ENCODE measurements at regions of chr19 and their contacts with region 1.

Region 1: GRCh38 chr19:38335949-38336637 is 463 bp downstream of the CATSPERG start:
- DNase-seq: peak; percentile 85 to 96 (median 95)
- ATAC-seq: peak; percentile 66
- H3K4me3 ChIP-seq: peak overlapping the region; percentile 85 to 94
- H3K4me3 Mint-ChIP-seq: peak overlapping the region; percentile 89
- H3K27ac ChIP-seq: peak overlapping the region; percentile 84 to 95
- H3K27ac Mint-ChIP-seq: peak overlapping the region; percentile 97
- H3K4me1 ChIP-seq: peaks cover 10% of the 10 kb centered on the region
- H3K4me1 Mint-ChIP-seq: peaks cover 17% of the 10 kb centered on the region
- H3K27me3 ChIP-seq: no peaks in the 10 kb centered on the region
- H3K27me3 Mint-ChIP-seq: no peaks in the 10 kb centered on the region
- CTCF ChIP-seq: no peak

Region 2: DNA sequence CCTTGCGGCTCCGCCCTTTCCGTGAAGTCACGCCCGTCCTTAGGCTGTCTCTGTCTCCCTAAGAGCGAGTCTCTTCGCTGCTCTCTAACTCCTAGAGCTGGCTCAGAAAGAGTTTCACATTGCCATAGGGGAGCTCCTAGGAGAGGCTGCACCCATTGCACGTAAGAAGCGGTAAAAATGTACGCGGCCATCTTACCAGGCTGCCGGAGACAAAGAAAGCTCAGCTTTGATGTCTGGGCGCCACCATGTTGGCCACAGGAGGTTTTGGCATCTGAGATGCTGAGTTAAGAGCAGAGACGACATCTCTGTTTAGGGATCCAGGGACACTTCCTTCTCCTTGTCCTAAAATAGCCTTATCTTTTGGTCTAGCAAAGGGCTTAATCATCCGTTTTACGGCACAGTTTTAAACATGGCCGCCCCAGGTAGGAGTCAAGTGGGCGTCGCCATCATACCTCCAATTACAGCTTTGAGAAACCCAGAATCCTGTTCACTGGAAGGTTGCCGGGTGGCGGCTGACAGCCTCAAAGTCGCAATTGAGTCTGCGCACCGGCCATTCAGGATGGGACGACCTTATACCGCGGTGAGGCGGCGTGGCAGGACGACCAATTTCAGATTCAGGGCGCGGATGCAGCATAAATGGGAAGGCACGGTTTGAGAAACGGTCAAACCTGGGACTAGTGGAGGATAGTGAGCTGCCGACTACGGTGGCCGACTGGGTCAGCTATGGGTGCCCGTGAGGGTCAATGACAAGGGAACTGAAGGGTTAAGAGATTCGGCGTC is 829.5 kb before region 1 on chr19 and contains the start of gene ZNF793:
- CTCF ChIA-PET with region 1: no interaction called
- POLR2A ChIA-PET with region 1: no interaction called
- intact Hi-C with region 1: loop called in 1 of 2 experiments (anchors 2 kb)
- DNase-seq: peak; percentile 53 to 89 (median 83)
- ATAC-seq: peak; percentile 87
- H3K4me3 ChIP-seq: peak within 1 kb of the TSS; percentile 82 to 86
- H3K4me3 Mint-ChIP-seq: no peak within 1 kb of the TSS
- H3K27ac ChIP-seq: peak within 1 kb of the TSS; percentile 94 to 97
- H3K27ac Mint-ChIP-seq: no peak within 1 kb of the TSS
- H3K4me1 ChIP-seq: peaks cover 16% of the 10 kb centered on the region
- H3K4me1 Mint-ChIP-seq: no peaks in the 10 kb centered on the region
- H3K27me3 ChIP-seq: no peaks in the 10 kb centered on the region
- H3K27me3 Mint-ChIP-seq: no peaks in the 10 kb centered on the region
- CTCF ChIP-seq: no peak
- total RNA-seq, gene ZNF793: 2.4 to 3.3 TPM

Region 3: GRCh38 chr19:38122402-38123093 is 213.5 kb before region 1 on chr19:
- CTCF ChIA-PET with region 1: no interaction called
- POLR2A ChIA-PET with region 1: no interaction called
- intact Hi-C with region 1: no loop called
- DNase-seq: no peak
- ATAC-seq: no peak
- H3K4me3 ChIP-seq: no peak overlapping the region
- H3K4me3 Mint-ChIP-seq: no peak overlapping the region
- H3K27ac ChIP-seq: no peak overlapping the region
- H3K27ac Mint-ChIP-seq: no peak overlapping the region
- H3K4me1 ChIP-seq: no peaks in the 10 kb centered on the region
- H3K4me1 Mint-ChIP-seq: no peaks in the 10 kb centered on the region
- H3K27me3 ChIP-seq: no peaks in the 10 kb centered on the region
- H3K27me3 Mint-ChIP-seq: no peaks in the 10 kb centered on the region
- CTCF ChIP-seq: no peak

Region 4: DNA sequence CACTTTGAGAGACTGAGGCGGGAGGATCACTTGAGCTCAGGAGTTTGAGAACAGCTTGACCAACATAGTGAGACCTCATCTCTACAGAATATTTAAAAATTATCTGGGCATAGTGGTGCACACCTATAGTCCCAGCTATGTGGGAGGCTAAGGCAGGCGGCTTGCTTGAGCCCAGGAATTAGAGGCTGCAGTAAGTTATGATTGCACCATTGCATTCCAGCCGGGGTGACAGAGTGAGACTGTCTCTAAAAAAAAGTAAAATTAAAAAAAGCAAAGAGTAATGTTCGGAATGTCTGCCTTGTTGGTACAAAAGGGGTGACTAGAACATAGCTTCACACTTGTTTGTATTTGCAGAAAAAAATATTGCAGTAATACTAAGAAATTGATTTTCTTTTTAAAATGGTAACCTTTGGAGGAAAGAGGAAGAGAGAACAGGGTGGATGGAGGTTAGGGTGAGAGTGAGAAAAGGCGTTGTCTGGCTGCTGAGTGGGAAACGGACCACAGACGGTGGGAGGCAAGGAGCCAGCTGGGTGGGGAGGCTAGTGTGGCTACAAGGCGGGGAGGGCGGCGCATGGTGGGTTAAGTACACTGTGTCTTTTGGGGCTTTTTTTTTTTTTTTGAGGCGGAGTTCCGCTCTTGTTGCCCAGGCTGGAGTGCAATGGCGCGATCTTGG is 90.1 kb before region 1 on chr19:
- CTCF ChIA-PET with region 1: interaction called, 62 read pairs
- POLR2A ChIA-PET with region 1: interaction called, 7 read pairs
- intact Hi-C with region 1: loop called in 1 of 2 experiments (anchors 1 kb)
- DNase-seq: no peak
- ATAC-seq: no peak
- H3K4me3 ChIP-seq: no peak overlapping the region
- H3K4me3 Mint-ChIP-seq: no peak overlapping the region
- H3K27ac ChIP-seq: no peak overlapping the region
- H3K27ac Mint-ChIP-seq: no peak overlapping the region
- H3K4me1 ChIP-seq: no peaks in the 10 kb centered on the region
- H3K4me1 Mint-ChIP-seq: peaks cover 4% of the 10 kb centered on the region
- H3K27me3 ChIP-seq: no peaks in the 10 kb centered on the region
- H3K27me3 Mint-ChIP-seq: peaks cover 5% of the 10 kb centered on the region
- CTCF ChIP-seq: no peak

Region 5: DNA sequence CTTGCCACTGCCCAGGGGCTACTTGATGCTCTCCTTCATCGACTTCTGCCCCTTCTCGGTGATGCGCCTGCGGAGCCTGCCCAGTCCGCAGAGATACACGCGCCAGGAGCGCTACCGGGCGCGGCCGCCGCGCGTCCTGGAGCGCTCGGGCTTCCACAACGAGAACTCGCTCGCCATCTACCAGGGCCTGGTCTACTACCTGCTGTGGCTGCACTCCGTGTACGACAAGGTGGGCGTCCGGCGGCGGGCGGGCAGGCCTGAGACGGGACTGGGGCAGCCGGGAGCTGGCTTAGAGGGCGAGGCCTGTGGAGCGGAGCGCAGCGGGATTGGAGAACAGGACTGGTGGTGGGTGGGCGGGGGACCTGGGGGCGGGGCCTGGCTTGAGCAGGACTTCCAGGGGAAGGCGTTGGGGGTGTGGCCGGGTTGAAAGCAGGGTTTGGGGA is 25.6 kb after region 1 on chr19:
- CTCF ChIA-PET with region 1: interaction called, 5 read pairs
- POLR2A ChIA-PET with region 1: no interaction called
- intact Hi-C with region 1: loop called (anchors 1 kb)
- DNase-seq: peak; percentile 17 to 75 (median 58)
- ATAC-seq: peak; percentile 73
- H3K4me3 ChIP-seq: peak overlapping the region; percentile 50 to 77
- H3K4me3 Mint-ChIP-seq: peak overlapping the region; percentile 81
- H3K27ac ChIP-seq: no peak overlapping the region
- H3K27ac Mint-ChIP-seq: no peak overlapping the region
- H3K4me1 ChIP-seq: peaks cover 10% of the 10 kb centered on the region
- H3K4me1 Mint-ChIP-seq: peaks cover 14% of the 10 kb centered on the region
- H3K27me3 ChIP-seq: peaks cover 0 to 3% of the 10 kb centered on the region in 2 experiments
- H3K27me3 Mint-ChIP-seq: peaks cover 2% of the 10 kb centered on the region
- CTCF ChIP-seq: peak; percentile 16

Region 6: DNA sequence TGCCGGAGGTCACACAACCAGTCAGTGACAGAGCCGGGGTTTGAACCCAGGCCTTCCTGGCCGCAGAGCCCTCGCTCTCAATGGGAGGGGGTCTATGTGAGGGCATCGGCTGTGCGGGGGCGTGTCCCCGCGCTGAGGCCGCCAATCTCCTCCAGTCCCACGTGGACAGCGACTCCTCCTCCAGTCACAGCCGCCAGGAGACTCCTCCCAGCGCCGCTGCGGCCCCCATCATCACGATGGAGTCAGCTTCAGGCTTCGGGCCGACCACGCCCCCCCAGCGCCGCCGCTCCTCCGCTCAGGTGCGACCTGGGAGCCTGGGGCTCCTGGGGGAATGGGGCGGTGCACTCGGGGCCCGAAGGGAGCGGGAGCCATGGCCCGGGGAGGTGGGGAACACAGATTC is 58.4 kb after region 1 on chr19:
- CTCF ChIA-PET with region 1: interaction called, 3 read pairs
- POLR2A ChIA-PET with region 1: no interaction called
- intact Hi-C with region 1: loop called (anchors 2 to 5 kb)
- DNase-seq: peak in 8 of 9 experiments; percentile 33 to 79 (median 66)
- ATAC-seq: peak; percentile 72
- H3K4me3 ChIP-seq: peak overlapping the region; percentile 18 to 47
- H3K4me3 Mint-ChIP-seq: peak overlapping the region; percentile 77
- H3K27ac ChIP-seq: no peak overlapping the region
- H3K27ac Mint-ChIP-seq: peak overlapping the region; percentile 52
- H3K4me1 ChIP-seq: peaks cover 15% of the 10 kb centered on the region
- H3K4me1 Mint-ChIP-seq: peaks cover 17% of the 10 kb centered on the region
- H3K27me3 ChIP-seq: no peaks in the 10 kb centered on the region
- H3K27me3 Mint-ChIP-seq: peaks cover 8% of the 10 kb centered on the region
- CTCF ChIP-seq: no peak

Region 7: DNA sequence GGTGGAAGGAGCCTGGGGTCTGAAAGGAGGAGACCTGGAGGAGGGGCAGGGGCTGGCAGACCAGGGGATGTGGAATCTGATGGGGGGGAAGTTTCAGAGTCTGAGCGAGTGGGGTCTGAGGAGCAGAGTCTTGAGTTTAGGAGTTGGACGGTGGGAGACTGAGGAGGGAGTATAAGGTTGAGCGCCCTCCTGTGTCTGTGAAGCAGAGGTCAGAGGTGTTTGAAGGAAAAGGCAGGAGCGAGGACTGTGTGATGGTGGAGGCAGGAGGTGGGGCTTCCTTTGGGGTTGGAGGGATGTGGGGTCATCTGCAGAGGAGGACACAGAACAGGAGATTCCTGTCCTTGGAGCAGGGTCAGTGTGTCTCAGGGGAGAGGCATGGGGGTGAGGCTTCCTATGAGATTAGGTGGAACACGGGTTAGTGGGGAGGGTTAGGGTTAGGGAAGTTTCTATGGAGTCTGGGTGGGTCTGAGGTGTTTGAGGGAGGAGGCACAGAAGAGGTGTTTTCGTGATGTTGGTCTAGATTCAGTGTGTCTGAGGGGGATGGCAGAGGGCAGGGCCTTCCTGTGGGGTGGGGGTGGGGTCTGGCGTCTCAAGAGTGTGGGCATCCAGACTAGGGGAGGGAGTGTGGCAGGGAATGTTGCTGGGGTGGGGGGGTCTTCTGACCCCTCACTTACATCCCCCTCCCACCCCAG is 105.7 kb after region 1 on chr19:
- CTCF ChIA-PET with region 1: no interaction called
- POLR2A ChIA-PET with region 1: no interaction called
- intact Hi-C with region 1: no loop called
- DNase-seq: peak in 2 of 9 experiments; percentile 20 to 30
- ATAC-seq: no peak
- H3K4me3 ChIP-seq: no peak overlapping the region
- H3K4me3 Mint-ChIP-seq: no peak overlapping the region
- H3K27ac ChIP-seq: no peak overlapping the region
- H3K27ac Mint-ChIP-seq: no peak overlapping the region
- H3K4me1 ChIP-seq: no peaks in the 10 kb centered on the region
- H3K4me1 Mint-ChIP-seq: no peaks in the 10 kb centered on the region
- H3K27me3 ChIP-seq: peaks cover 0 to 3% of the 10 kb centered on the region in 2 experiments
- H3K27me3 Mint-ChIP-seq: peaks cover 17% of the 10 kb centered on the region
- CTCF ChIP-seq: no peak

Region 8: DNA sequence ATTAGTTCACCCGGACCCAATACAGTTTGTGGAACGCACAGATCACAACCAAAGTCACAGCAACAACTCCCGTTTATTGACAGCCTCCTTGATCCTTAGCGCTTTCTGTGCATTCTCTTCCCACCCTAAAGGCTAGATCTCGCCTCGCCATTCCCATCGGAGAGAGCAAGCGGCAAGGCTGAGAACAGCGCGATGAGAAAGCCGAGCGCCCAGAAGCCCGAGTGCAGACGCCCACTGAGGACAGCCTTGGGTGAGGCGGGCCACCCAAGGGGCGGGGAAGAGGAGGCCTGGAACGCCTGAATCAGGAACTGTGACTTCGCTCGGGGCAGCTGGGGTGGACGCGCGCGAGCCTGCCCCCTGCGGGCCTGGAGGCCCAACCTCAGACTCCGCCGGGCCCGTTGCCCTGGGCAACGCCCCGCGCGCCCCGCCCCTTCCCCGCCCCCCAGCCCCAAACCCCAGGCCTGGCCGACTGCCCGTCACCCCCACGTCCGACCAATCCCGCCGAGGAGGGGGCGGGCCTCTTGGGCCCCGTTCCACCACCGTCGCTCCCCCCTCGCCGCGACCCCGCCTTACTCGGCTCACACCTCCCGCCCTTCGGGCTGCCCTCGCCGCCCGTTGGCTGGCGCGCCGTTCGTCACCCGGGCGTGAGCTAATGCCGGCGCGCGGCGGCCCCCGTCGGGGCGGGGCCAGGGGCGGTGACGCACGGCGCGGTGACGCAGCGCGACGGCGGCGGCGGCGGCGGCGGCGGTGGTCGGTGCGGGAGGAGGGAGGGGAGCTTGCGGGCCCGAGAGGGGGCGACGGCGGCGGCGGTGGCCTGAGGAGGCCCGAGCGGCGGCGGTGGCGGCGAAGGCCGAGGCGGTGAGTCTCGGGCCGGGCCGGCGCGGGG is 1005.9 kb after region 1 on chr19 and contains the start of gene SAMD4B:
- CTCF ChIA-PET with region 1: no interaction called
- POLR2A ChIA-PET with region 1: no interaction called
- intact Hi-C with region 1: loop called in 1 of 2 experiments (anchors 2 kb)
- DNase-seq: peak; percentile 98 to 100 (median 99)
- ATAC-seq: peak; percentile 90
- H3K4me3 ChIP-seq: peak within 1 kb of the TSS; percentile 93 to 97
- H3K4me3 Mint-ChIP-seq: peak within 1 kb of the TSS; percentile 100
- H3K27ac ChIP-seq: peak within 1 kb of the TSS; percentile 67 to 88
- H3K27ac Mint-ChIP-seq: peak within 1 kb of the TSS; percentile 98
- H3K4me1 ChIP-seq: peaks cover 29% of the 10 kb centered on the region
- H3K4me1 Mint-ChIP-seq: peaks cover 69% of the 10 kb centered on the region
- H3K27me3 ChIP-seq: no peaks in the 10 kb centered on the region
- H3K27me3 Mint-ChIP-seq: no peaks in the 10 kb centered on the region
- CTCF ChIP-seq: peak; percentile 73
- total RNA-seq, gene SAMD4B: 68.3 to 78.1 TPM

Measured in CD8-positive, alpha-beta T cell (primary cell).